ENCODE measurements at regions of chr12 and their contacts with region 1.

Region 1: DNA sequence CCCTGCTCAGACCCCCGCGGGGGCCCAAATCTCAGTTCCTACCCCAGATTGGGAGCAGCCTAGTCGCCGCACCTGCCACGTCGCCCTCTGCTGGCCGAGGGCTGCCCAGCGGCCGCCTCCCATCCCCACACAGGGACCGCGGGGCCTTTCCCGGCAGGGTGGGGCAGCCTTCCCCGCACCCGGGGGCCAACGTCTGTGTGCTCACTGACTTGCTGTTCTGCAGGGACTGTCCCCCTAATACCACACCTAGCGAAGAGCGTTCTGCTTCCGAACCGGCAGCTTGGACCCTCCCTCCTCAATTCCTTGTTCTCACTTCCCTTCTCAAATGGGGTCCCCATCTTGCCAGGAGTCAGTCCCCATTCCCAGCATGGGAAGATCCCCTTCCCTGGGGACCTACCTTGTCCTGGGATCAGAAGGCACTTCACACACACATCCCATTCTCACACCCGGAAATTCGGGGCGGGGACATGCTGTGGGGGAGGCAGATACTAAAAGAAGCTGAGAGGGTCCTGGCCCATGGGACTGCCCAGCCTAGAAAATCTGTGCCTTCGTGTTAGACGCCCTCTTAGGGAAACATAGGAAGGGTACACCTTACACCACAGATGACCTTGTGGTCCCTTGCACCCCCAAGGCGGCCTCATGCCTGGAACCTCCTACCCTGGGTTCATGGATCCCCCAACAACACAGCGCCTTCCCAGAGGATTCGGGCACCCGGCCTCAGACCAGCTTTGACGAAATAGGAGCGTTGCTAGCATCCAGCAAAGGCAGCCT is 16.4 kb downstream of the ACVRL1 start:
- DNase-seq: peak; percentile 69
- H3K4me3 ChIP-seq: no peak overlapping the region
- H3K27ac ChIP-seq: peak overlapping the region; percentile 99
- H3K4me1 ChIP-seq: peaks cover 54% of the 10 kb centered on the region
- H3K27me3 ChIP-seq: no peaks in the 10 kb centered on the region
- CTCF ChIP-seq: peak; percentile 92 to 98
- POLR2A ChIP-seq: peak; percentile 87

Region 2: DNA sequence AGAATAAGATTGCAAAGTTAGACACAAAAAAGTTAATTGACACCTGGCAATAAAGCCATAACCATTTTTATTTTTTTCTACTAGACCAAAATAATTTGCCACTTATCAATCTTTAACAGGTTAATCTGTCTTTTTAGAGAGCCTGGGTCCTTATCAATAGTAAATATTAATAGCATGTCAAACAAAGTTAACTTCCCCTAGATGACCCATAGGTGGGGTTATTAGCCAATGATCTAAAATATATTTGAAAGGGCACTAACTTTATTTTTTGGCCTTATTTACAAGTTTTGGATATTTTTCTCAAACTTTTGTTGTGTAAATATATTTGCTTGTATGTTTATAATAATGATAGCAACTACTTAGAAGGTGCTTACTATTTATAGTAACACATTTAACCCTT is 31.8 kb before region 1 on chr12:
- CTCF ChIA-PET with region 1: interaction called, 393 read pairs
- POLR2A ChIA-PET with region 1: interaction called, 10 read pairs
- dilution Hi-C with region 1: no loop called
- intact Hi-C with region 1: loop called (anchors 1 kb)
- DNase-seq: no peak
- H3K4me3 ChIP-seq: no peak overlapping the region
- H3K27ac ChIP-seq: no peak overlapping the region
- H3K4me1 ChIP-seq: peaks cover 35% of the 10 kb centered on the region
- H3K27me3 ChIP-seq: no peaks in the 10 kb centered on the region
- CTCF ChIP-seq: peak in 1 of 2 donors; percentile 23
- POLR2A ChIP-seq: no peak

Region 3: GRCh38 chr12:51905471-51906429 is 17.9 kb before region 1 on chr12:
- CTCF ChIA-PET with region 1: interaction called, 393 read pairs
- POLR2A ChIA-PET with region 1: interaction called, 10 read pairs
- dilution Hi-C with region 1: no loop called
- intact Hi-C with region 1: loop called (anchors 1 kb)
- DNase-seq: peak; percentile 90
- H3K4me3 ChIP-seq: peak overlapping the region in 2 of 3 experiments; percentile 10 to 92
- H3K27ac ChIP-seq: peak overlapping the region; percentile 99
- H3K4me1 ChIP-seq: peaks cover 66% of the 10 kb centered on the region
- H3K27me3 ChIP-seq: no peaks in the 10 kb centered on the region
- CTCF ChIP-seq: no peak
- POLR2A ChIP-seq: peak; percentile 48

Region 4: GRCh38 chr12:51951199-51951842 is 27.6 kb after region 1 on chr12 and contains the start of gene ACVR1B:
- CTCF ChIA-PET with region 1: interaction called, 12 read pairs
- POLR2A ChIA-PET with region 1: no interaction called
- dilution Hi-C with region 1: no loop called
- intact Hi-C with region 1: loop called (anchors 1 kb)
- DNase-seq: peak; percentile 92
- H3K4me3 ChIP-seq: peak within 1 kb of the TSS; percentile 59 to 89 (median 73)
- H3K27ac ChIP-seq: peak within 1 kb of the TSS; percentile 58
- H3K4me1 ChIP-seq: peaks cover 28% of the 10 kb centered on the region
- H3K27me3 ChIP-seq: peaks cover 0 to 4% of the 10 kb centered on the region in 2 experiments
- CTCF ChIP-seq: no peak
- POLR2A ChIP-seq: peak; percentile 54
- total RNA-seq, gene ACVR1B: 25.4 and 33.7 TPM in 2 replicates

Region 5: DNA sequence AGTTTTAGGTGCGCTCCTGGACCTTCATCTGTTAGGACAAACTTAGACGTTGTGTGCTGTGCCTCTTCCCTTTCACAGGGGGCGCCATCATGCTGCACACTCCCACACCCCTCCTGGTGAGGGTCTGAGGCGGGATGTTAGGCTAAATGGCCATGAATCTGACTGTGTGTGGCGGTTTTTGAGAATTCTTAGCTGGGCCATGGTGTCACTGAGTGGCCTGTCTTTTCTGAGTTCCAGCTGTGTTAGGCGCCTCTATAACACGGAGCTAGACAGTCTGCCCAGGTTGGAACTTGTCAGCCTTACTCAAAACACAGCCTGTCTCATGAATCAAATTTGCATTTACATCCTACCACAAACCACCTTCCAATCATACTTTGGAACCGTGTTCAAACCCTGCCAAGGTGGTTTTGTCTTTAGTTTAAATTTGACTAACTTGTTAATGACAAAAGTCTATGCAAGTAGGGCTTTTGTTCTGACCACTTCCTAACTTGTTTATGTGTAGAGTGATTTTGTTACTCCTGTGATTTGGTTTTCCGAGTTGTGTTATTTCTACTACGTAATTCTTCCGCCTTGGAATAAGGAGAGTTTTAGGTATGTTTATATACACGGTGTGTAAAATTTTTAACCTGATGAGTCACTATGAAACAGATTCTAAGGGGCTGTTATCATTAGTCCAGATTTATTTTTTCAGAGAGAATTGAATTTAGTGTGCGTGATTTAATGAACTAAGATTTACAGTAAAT is 47.4 kb after region 1 on chr12:
- CTCF ChIA-PET with region 1: interaction called, 39 read pairs
- POLR2A ChIA-PET with region 1: no interaction called
- dilution Hi-C with region 1: no loop called
- intact Hi-C with region 1: loop called (anchors 1 kb)
- DNase-seq: peak; percentile 89
- H3K4me3 ChIP-seq: peak overlapping the region in 1 of 3 experiments; percentile 3
- H3K27ac ChIP-seq: peak overlapping the region; percentile 98
- H3K4me1 ChIP-seq: peaks cover 70% of the 10 kb centered on the region
- H3K27me3 ChIP-seq: no peaks in the 10 kb centered on the region
- CTCF ChIP-seq: peak; percentile 82 to 85
- POLR2A ChIP-seq: no peak